Endothelial cell of umbilical vein (primary cell): ENCODE measurements at regions of chr6 and their contacts with region 1.

Region 1: DNA sequence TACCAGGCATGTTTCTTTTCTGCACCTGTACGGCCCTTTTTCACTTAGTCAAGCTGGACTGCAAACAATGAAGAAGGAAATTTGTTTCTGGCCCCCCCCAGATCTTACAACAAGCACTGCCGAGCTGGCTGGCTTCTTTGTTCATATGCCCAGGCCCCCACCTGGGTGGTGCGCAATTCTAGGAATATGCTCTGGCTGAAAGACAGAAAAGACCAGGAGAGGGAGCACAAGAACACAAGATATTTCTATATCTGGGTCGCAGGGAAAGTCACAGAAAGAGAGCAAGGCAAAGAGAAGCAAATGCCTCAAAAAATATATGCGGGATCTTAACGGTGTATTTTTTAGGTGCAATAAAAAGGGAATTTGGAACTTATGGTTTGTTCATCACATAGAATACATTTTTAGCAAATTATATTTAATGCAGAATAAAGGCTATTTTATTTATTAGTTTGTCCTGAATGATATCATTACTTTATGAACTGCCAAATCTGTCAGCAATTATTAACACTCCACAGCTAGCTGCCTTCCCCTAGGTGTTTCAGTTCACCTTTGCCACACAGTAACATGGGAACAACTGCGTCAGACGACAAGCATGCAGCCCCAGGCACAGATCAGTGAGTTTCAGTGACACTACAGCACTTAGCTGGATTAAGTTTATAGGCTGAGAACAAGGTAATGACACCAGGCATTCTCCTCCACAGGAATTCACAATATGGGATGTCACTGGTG is 76.5 kb downstream of the GJA10 start:
- DNase-seq: peak; percentile 58
- H3K4me3 ChIP-seq: no peak overlapping the region
- H3K27ac ChIP-seq: no peak overlapping the region
- H3K4me1 ChIP-seq: no peaks in the 10 kb centered on the region
- H3K27me3 ChIP-seq: peaks cover 0 to 11% of the 10 kb centered on the region in 2 experiments
- CTCF ChIP-seq: peak; percentile 48 to 51
- POLR2A ChIP-seq: no peak

Region 2: DNA sequence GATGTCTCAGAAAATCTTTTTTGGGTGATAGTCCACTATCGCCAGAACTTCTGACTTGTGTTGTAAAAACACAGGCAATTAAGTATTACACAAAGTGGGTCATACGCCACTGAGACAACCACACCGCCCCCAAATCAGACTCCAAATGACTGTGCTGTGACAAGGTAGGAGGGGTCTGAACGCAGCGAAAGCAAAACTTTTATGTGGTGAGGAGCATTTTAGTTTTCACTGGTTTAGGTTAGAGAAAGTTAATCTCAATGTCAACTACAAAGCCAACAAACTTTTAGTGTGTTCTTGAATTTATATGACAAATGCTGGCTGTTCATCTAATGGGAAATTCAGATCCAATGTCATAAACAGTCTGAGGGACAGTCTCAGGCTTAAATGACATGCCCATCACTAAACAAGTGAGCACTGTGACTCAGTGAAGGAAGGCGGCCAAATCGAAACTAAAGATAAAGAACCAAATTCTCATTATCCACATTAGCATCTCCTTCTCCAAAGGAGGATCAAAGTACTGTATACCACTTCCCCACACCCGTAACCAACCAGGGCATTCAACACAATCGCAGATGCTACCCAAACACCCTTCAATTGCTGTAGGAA is 110.2 kb after region 1 on chr6:
- CTCF ChIA-PET with region 1: no interaction called
- POLR2A ChIA-PET with region 1: no interaction called
- dilution Hi-C with region 1: no loop called
- intact Hi-C with region 1: loop called (anchors 10 kb)
- DNase-seq: no peak
- H3K4me3 ChIP-seq: no peak overlapping the region
- H3K27ac ChIP-seq: no peak overlapping the region
- H3K4me1 ChIP-seq: no peaks in the 10 kb centered on the region
- H3K27me3 ChIP-seq: peaks cover 8 to 24% of the 10 kb centered on the region in 2 experiments
- CTCF ChIP-seq: no peak
- POLR2A ChIP-seq: no peak

Region 3: DNA sequence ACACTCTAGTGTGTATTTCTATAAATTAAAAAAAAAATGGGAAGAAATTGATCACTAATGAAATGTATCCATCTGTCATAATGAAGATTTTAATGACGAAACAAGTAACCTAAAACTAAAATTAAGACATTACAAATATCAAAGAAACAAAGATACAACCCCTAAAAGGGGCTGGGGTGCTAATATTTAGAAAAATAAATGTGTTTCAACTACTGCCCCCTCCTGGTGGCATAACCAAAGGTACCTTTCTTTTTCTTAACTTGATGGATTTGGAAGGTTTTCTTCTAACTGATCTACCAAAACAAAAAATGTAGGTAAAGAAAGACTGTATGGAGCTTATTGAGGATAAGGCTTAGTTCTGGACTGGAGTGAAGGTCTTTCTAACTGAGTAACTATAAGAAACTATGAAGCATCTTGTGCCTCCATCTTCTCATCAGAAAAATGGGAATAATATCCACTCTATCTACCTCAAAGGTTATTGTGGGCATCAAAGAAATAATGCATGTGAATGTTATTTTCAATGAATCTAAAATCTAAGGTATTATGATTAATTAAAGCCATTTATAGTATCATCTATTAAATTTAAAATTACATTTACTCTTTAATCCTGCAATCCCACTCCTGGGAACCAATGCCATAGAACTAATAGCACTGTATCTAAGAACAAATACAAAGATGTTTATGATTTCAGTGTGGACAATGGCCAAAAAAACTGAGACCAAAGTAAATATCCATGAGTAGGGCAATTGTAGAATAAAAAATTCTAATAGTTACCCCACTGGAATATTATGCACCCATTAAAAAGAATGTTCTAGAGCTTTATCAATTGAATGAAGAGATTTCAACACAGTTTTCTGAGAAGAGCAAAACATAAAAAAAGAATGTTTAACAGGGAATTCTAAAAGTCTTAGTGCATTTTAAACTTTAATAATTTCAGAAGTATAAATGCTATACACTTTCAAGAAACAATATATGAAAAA is 208.7 kb after region 1 on chr6:
- CTCF ChIA-PET with region 1: interaction called, 3 read pairs
- POLR2A ChIA-PET with region 1: no interaction called
- dilution Hi-C with region 1: no loop called
- intact Hi-C with region 1: loop called (anchors 1 kb)
- DNase-seq: no peak
- H3K4me3 ChIP-seq: no peak overlapping the region
- H3K27ac ChIP-seq: no peak overlapping the region
- H3K4me1 ChIP-seq: peaks cover under 1% of the 10 kb centered on the region
- H3K27me3 ChIP-seq: peaks cover 9 to 11% of the 10 kb centered on the region in 2 experiments
- CTCF ChIP-seq: peak; percentile 22 to 23
- POLR2A ChIP-seq: no peak

Region 4: DNA sequence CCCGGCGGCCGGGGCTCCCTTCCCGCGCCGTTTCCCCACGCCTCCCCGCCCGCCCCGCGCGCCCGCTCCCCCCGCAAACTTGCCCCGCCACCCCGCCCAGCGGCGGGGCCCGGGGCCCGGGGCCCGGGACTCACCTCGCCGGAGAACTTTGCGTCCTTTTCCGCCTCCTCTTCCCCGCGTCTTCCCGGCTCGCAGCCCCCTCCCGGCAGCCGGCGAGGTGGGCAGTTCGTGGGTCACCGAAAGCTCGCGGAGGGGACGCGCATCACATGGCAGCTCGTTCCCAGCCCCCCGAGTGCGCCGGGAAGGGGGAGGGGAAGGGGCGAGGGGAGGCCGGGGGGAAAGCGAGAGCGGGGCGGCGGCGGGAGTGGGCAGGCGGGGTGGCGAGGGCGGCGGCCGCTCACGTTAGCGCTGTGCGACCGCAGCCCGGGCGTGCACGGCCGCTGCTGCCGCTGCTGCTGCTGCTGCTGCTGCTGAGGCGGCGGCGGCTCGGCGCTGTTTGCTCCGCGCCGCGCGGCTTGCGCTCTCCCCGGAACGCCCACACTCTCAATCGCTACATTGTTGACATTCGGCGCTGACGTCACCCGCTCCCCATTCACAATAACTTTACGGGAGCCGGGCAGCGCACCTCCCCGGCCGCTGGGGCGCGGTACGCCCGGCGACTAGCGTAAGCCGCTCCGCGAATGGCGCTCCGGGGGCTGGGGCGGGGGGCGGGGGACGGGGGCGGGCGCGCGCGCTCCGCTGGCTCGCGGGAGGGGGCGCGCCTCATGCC is 325.8 kb after region 1 on chr6 and contains the start of gene BACH2:
- CTCF ChIA-PET with region 1: interaction called, 3 read pairs
- POLR2A ChIA-PET with region 1: no interaction called
- dilution Hi-C with region 1: no loop called
- intact Hi-C with region 1: loop called (anchors 1 kb)
- DNase-seq: peak; percentile 78
- H3K4me3 ChIP-seq: peak within 1 kb of the TSS; percentile 34 to 83 (median 57)
- H3K27ac ChIP-seq: no peak within 1 kb of the TSS
- H3K4me1 ChIP-seq: peaks cover 6% of the 10 kb centered on the region
- H3K27me3 ChIP-seq: peaks cover 12 to 38% of the 10 kb centered on the region in 2 experiments
- CTCF ChIP-seq: peak in 1 of 2 donors; percentile 30
- POLR2A ChIP-seq: no peak
- total RNA-seq, gene BACH2: 5.6 and 5.9 TPM in 2 replicates

Region 5: DNA sequence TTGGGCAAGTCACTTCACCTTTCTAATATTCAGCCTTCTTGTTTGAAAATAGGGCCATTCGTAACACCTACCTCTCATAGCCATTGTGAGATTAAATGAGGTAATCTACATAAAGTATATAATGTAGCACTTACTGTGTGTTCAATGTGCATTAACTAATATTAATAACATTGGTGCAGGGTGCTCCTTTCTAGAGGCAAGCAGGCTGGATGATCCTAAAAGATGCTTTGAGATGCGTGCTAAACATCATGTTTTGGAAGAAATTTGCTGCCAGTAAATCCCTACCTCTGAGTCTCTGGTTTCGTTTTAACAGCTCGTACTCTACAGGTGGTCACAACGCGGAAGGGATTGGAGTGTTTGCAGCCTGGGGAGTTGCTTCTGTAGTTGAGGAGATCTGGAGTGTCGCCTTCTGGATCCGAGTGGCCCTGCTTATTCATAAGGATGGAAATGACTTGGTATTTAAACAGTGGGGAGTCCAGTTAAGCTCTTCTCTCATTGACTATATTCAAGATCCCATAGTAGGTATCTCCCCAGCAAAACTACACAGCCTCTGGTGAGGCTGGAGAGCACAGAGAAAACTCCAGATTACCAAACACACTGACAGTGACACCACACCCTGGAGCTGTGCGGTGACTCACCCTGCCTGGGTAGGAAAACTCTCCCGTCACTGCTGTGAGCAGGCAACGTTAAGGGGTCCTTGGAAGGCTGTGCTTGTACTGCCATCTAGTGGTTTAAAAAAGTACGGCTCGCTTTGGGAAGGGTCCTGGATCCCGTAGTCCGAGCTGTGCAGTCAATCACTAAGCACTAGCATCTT is 508.2 kb after region 1 on chr6:
- CTCF ChIA-PET with region 1: interaction called, 26 read pairs
- POLR2A ChIA-PET with region 1: no interaction called
- dilution Hi-C with region 1: no loop called
- intact Hi-C with region 1: loop called (anchors 1 kb)
- DNase-seq: peak; percentile 89
- H3K4me3 ChIP-seq: no peak overlapping the region
- H3K27ac ChIP-seq: no peak overlapping the region
- H3K4me1 ChIP-seq: peaks cover 9% of the 10 kb centered on the region
- H3K27me3 ChIP-seq: peaks cover 0 to 3% of the 10 kb centered on the region in 2 experiments
- CTCF ChIP-seq: peak; percentile 75 to 81
- POLR2A ChIP-seq: no peak